Naive thymus-derived CD4-positive, alpha-beta T cell (primary cell): ENCODE measurements at regions of chr5 and their contacts with region 1.

Region 1: GRCh38 chr5:139293504-139294373 is at the start of gene MATR3:
- DNase-seq: peak; percentile 83 to 94 (median 91)
- ATAC-seq: peak; percentile 95
- H3K4me3 ChIP-seq: peak within 1 kb of the TSS; percentile 87
- H3K4me3 Mint-ChIP-seq: peak within 1 kb of the TSS; percentile 91 to 99 (median 98)
- H3K27ac ChIP-seq: peak within 1 kb of the TSS; percentile 98
- H3K27ac Mint-ChIP-seq: peak within 1 kb of the TSS; percentile 96 to 100 (median 99)
- H3K4me1 ChIP-seq: peaks cover 29 to 37% of the 10 kb centered on the region in 2 donors
- H3K4me1 Mint-ChIP-seq: peaks cover 33 to 51% (median 42%) of the 10 kb centered on the region in 7 donors
- H3K27me3 ChIP-seq: no peaks in the 10 kb centered on the region
- H3K27me3 Mint-ChIP-seq: no peaks in the 10 kb centered on the region
- total RNA-seq, gene MATR3: 219 to 333 (median 274) TPM

Region 2: DNA sequence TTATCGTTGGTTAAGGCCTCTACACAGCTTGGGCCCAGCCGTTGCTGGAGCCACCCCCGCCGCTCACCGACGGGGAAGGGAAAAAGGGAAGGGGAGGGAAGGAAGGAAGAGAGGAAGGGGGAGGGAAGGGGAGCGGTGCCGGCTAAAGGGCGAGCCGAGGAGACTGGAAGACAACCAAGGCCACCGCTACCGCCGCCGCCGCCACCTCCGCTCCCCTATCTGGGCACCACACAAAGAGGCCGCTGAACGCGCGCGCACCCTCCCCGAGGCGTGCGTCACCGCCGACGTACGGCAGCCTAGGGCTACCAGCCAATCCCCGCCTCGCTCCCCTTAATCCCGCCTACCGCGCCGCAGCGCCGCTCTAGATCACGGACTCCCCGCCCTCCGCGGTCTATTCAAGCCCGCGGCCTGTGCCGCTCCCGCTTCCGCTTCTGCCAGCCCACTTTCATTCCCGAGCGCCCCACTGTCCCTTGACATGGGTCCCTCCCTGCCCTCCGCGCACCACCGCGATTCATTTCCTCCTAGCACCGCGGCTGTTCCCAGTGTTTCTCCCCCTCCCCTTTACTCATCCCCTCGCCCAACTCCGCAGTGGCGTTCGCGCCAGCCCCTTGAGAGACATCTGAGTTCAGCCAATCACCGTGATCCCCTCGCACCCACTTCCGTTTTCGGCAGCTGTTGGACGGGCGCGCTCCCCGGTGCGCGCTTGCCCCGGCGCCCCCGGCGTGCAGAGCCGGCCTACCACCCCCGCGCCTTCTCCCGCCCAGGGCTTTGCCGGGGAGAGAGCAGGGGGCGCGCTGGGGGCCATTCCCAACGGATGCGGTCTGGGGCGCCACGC is 1539.4 kb before region 1 on chr5 and contains the start of gene HNRNPA0:
- CTCF ChIA-PET with region 1: interaction called, 3 read pairs
- POLR2A ChIA-PET with region 1: no interaction called
- intact Hi-C with region 1: loop called in 1 of 2 experiments (anchors 10 kb)
- DNase-seq: peak; percentile 94 to 99 (median 98)
- ATAC-seq: peak; percentile 90
- H3K4me3 ChIP-seq: peak within 1 kb of the TSS; percentile 98
- H3K4me3 Mint-ChIP-seq: peak within 1 kb of the TSS; percentile 85 to 100 (median 98)
- H3K27ac ChIP-seq: peak within 1 kb of the TSS; percentile 98
- H3K27ac Mint-ChIP-seq: peak within 1 kb of the TSS; percentile 99 to 100 (median 100)
- H3K4me1 ChIP-seq: peaks cover 17 to 20% of the 10 kb centered on the region in 2 donors
- H3K4me1 Mint-ChIP-seq: peaks cover 21 to 43% (median 31%) of the 10 kb centered on the region in 7 donors
- H3K27me3 ChIP-seq: no peaks in the 10 kb centered on the region
- H3K27me3 Mint-ChIP-seq: peaks cover 0 to 2% (median 0%) of the 10 kb centered on the region in 5 donors
- total RNA-seq, gene HNRNPA0: 30.0 to 40.2 (median 30.7) TPM

Region 3: DNA sequence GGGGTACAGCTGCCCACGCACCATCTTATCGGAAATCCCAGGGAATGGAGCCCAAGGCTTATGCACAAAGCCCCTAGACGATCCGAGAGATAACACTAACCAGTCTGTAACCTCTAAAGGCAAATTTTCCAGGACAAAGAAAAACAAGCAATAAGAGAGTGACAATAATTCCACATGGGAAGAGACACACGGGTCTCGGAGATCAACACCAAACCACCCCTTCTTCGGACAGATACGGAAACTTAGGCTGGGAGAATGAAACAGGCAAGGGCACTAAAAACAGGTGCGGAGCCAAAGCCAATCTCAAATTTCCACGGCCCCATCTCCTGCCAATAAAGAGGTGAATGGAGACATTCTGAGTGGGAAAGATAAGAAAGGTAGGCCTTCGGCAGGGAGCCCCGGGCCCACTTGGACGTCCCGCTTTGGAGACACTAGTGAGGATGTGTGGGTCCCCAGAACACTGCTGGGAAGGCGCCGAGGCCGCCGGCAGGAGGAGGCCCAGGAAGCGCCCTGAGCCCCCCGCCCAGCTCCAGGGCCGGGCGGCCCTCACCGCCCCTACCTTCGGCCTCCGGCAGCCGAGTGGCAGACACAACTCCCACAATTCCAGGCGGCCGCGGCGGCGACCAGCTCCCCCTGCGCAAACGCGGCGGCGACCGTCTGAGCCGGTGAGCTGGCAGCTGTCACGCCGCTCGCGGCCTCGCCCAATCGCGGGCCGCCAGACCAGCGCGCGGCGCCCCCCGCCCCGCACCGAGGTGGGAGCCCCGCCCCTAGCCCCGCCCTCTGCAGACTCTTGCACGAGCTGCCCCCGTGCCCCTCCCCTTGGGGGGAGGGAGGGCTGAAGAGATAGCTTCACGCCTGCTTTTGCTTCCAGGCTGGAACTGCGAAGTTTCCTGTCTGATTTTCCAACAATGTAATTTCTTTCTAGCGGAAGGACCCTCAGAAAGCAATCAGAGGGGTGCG is 95.7 kb before region 1 on chr5 and contains the start of gene SIL1:
- CTCF ChIA-PET with region 1: no interaction called
- POLR2A ChIA-PET with region 1: interaction called, 4 read pairs
- intact Hi-C with region 1: loop called (anchors 1 kb)
- DNase-seq: peak; percentile 88 to 94 (median 91)
- ATAC-seq: peak; percentile 99
- H3K4me3 ChIP-seq: peak within 1 kb of the TSS; percentile 97
- H3K4me3 Mint-ChIP-seq: peak within 1 kb of the TSS; percentile 83 to 96 (median 90)
- H3K27ac ChIP-seq: peak within 1 kb of the TSS; percentile 89
- H3K27ac Mint-ChIP-seq: peak within 1 kb of the TSS; percentile 86 to 96 (median 91)
- H3K4me1 ChIP-seq: peaks cover 8% of the 10 kb centered on the region in 2 donors
- H3K4me1 Mint-ChIP-seq: peaks cover 17 to 38% (median 26%) of the 10 kb centered on the region in 7 donors
- H3K27me3 ChIP-seq: no peaks in the 10 kb centered on the region
- H3K27me3 Mint-ChIP-seq: no peaks in the 10 kb centered on the region
- total RNA-seq, gene SIL1: 11.9 to 27.1 (median 22.8) TPM

Region 4: DNA sequence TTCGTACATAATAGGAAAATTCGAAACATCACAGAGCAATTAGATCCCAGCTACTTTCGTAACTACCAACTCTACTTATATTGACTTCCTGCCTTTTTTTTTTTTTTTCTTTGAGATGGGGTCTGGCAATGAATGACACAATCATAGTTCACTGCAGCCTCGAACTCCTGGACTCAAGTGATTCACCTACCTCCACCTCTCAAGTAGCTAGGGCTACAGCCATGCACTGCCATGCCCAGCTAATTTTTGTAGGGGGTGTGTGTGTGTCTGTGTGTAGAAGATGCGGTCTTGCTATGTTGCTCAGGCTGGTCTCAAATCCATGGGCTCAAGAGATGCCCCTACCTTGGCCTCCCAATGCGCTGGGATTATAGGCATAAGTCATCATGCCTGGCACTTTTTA is 42.1 kb after region 1 on chr5:
- CTCF ChIA-PET with region 1: interaction called, 4 read pairs
- POLR2A ChIA-PET with region 1: interaction called, 61 read pairs
- intact Hi-C with region 1: loop called (anchors 1 kb)
- DNase-seq: peak in 1 of 9 donors; percentile 12
- ATAC-seq: peak; percentile 25
- H3K4me3 ChIP-seq: no peak overlapping the region
- H3K4me3 Mint-ChIP-seq: peak overlapping the region in 1 of 10 donors; percentile 37
- H3K27ac ChIP-seq: no peak overlapping the region
- H3K27ac Mint-ChIP-seq: peak overlapping the region in 8 of 9 donors; percentile 3 to 90 (median 66)
- H3K4me1 ChIP-seq: peaks cover 0 to 3% of the 10 kb centered on the region in 2 donors
- H3K4me1 Mint-ChIP-seq: peaks cover 1 to 21% (median 16%) of the 10 kb centered on the region in 7 donors
- H3K27me3 ChIP-seq: no peaks in the 10 kb centered on the region
- H3K27me3 Mint-ChIP-seq: no peaks in the 10 kb centered on the region

Region 5: DNA sequence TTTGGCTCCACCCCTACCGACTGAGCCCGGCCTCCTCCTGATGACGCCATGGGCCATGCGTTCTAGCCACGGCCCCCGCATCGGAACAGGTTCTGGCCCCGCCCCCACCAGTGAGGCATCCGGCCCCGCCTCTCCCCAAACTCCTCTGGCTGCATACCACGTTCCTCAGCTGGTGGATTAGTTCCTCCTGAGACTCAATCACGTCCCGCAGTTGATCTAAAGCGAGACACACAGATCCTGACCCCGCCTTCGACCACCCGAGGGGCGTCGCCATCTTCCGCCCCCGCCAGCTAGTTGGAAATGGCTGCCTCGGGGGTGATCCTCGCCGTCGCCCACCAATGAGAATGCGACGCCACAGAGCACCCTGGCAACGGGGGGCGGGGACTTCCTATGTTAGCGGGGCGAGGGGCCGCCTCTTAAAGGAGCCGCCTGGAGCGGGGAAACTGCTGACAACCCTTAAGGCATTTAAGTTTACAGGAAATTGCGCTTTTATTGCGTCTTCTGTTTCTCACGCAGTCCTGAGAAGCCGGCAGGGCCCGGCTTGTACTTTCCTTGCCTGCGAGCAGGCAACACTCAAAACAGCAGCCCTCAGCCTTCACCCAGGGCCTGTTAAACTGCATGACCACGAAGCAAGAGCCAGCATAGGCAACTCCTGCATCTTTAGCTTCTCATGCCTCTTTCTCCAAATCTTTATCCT is 110.2 kb after region 1 on chr5 and contains the start of gene SPATA24:
- CTCF ChIA-PET with region 1: no interaction called
- POLR2A ChIA-PET with region 1: interaction called, 5 read pairs
- intact Hi-C with region 1: loop called in 1 of 2 experiments (anchors 1 kb)
- DNase-seq: peak; percentile 90 to 99 (median 98)
- ATAC-seq: peak; percentile 94
- H3K4me3 ChIP-seq: peak within 1 kb of the TSS; percentile 56
- H3K4me3 Mint-ChIP-seq: peak within 1 kb of the TSS; percentile 88 to 98 (median 94)
- H3K27ac ChIP-seq: peak within 1 kb of the TSS; percentile 88
- H3K27ac Mint-ChIP-seq: peak within 1 kb of the TSS; percentile 96 to 100 (median 99)
- H3K4me1 ChIP-seq: peaks cover 16 to 18% of the 10 kb centered on the region in 2 donors
- H3K4me1 Mint-ChIP-seq: peaks cover 26 to 42% (median 36%) of the 10 kb centered on the region in 7 donors
- H3K27me3 ChIP-seq: no peaks in the 10 kb centered on the region
- H3K27me3 Mint-ChIP-seq: no peaks in the 10 kb centered on the region
- total RNA-seq, gene SPATA24: 4.4 to 7.6 (median 5.8) TPM

Region 6: DNA sequence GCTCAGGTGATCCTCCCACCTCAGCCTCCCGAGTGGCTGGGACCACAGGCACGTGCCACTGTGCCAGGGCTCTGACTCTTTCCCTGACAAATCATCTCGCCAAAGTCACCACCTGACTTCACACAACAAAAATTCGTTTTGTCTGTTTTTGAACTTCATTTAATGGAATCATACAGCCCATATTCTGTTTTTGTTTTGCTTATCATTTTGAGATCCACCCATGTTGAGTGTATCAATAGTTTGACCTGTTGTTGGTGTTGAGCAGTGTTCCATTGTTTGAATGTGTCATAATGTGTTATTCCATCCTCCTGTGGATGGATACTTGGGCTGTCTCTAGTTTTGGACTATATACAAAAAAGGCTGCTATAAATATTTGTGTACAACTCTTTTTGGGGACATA is 260.5 kb after region 1 on chr5:
- CTCF ChIA-PET with region 1: no interaction called
- POLR2A ChIA-PET with region 1: no interaction called
- intact Hi-C with region 1: no loop called
- DNase-seq: no peak
- ATAC-seq: no peak
- H3K4me3 ChIP-seq: no peak overlapping the region
- H3K4me3 Mint-ChIP-seq: no peak overlapping the region
- H3K27ac ChIP-seq: no peak overlapping the region
- H3K27ac Mint-ChIP-seq: no peak overlapping the region
- H3K4me1 ChIP-seq: no peaks in the 10 kb centered on the region
- H3K4me1 Mint-ChIP-seq: peaks cover 0 to 16% (median 4%) of the 10 kb centered on the region in 7 donors
- H3K27me3 ChIP-seq: no peaks in the 10 kb centered on the region
- H3K27me3 Mint-ChIP-seq: peaks cover 0 to 6% (median 0%) of the 10 kb centered on the region in 5 donors

Region 7: DNA sequence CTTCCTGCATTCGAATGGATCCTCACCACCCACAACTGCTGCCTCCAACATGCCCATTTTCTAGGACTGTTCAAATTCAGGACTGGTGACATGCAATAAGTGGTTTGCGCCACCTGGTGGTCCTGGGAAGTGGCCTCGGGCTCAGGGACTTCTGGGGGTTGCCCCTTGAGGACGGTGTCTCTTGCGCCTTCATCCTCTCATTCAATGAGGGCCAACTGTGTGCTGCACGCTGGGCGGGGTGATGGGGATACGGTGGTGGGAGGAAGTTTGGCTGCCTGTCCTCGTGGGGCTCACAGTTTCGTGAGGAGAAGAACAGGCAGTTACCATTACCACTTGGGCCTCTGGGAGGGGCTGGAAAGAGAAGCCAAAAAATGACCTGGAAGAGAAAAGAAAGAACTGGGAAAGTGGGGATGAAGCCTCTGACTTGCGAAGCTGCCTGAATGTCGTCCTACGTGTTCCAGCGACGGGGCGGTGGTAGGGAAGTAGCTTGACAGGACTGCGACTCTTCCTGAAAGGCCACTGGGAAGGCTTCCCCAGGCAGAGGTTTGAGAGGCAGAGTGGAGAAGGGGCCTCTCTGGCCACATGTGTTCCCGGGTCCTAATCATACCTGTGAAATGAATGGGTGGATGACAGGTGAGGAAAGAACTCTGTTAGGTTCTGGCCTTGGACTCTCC is 550.9 kb after region 1 on chr5:
- CTCF ChIA-PET with region 1: no interaction called
- POLR2A ChIA-PET with region 1: no interaction called
- intact Hi-C with region 1: loop called in 1 of 2 experiments (anchors 10 kb)
- DNase-seq: peak; percentile 26 to 62 (median 57)
- ATAC-seq: peak; percentile 28
- H3K4me3 ChIP-seq: no peak overlapping the region
- H3K4me3 Mint-ChIP-seq: peak overlapping the region in 2 of 10 donors; percentile 21 to 49
- H3K27ac ChIP-seq: no peak overlapping the region
- H3K27ac Mint-ChIP-seq: no peak overlapping the region
- H3K4me1 ChIP-seq: peaks cover 0 to 5% of the 10 kb centered on the region in 2 donors
- H3K4me1 Mint-ChIP-seq: peaks cover 7 to 17% (median 12%) of the 10 kb centered on the region in 7 donors
- H3K27me3 ChIP-seq: no peaks in the 10 kb centered on the region
- H3K27me3 Mint-ChIP-seq: peaks cover 13 to 59% (median 16%) of the 10 kb centered on the region in 5 donors